OCI-LY7 (cell line): ENCODE measurements at regions of chr14 and their contacts with region 1.

Region 1: DNA sequence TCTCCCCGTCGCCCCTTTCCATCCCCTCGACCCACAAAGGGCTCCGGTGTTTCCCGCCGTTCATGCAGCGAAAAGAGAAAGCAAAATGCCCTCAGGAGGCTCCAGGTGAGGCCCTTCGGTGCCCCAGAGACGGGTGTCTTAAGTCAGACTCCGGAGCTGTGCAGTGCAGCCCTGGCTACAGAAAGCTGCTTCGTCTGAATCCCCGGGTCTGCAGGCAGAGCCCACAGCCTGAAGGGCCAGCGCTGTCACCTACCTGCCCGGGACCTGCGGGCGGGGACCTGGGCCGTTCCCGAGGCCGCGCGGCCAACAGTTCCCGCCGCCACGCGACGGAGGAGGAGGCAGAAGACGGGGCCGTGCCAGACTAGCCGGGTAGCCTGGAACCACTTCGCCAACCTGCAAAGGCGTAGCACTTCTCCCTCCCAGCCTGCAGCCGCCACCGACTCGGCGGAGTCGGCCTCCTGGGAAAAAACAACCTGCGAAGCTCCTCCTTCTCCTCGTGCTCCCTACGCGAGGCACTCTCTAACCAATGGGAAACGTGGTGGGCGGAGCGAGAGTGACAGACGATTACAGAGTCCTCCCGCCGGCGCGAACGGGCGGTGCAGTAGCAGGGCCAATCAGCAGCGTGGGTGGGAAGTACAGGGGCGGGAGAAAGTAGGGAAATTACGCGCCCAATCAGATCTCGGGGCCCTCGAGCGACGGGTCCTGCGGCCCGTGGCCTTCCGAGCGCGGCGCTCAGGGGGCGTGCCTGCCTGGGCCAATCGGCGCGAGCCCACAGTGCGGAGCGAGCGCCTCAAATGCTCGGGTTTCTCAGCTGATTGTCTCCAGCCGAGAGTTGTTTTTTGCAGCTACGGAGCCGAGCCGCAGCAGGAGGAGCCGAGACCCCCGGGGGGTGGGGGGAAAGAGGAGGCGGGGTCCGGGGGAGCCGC is at the starts of genes GPR137C and TXNDC16:
- DNase-seq: peak; percentile 100
- H3K4me3 ChIP-seq: peak within 1 kb of the TSS; percentile 99
- H3K27ac ChIP-seq: peak within 1 kb of the TSS; percentile 84
- H3K4me1 ChIP-seq: peaks cover 41% of the 10 kb centered on the region
- CTCF ChIP-seq: no peak
- total RNA-seq, gene GPR137C: 1.1 TPM in 2 replicates
- total RNA-seq, gene TXNDC16: 13.8 and 21.6 TPM in 2 replicates

Region 2: GRCh38 chr14:51651388-51652167 is 900.7 kb before region 1 on chr14 and contains the start of gene FRMD6:
- CTCF ChIA-PET with region 1: no interaction called
- POLR2A ChIA-PET with region 1: no interaction called
- intact Hi-C with region 1: loop called (anchors 5 kb)
- DNase-seq: peak; percentile 88
- H3K4me3 ChIP-seq: peak within 1 kb of the TSS; percentile 87
- H3K27ac ChIP-seq: peak within 1 kb of the TSS; percentile 78
- H3K4me1 ChIP-seq: peaks cover 31% of the 10 kb centered on the region
- CTCF ChIP-seq: peak; percentile 78
- total RNA-seq, gene FRMD6: 7.6 and 12.3 TPM in 2 replicates

Region 3: GRCh38 chr14:52695481-52696091 is 143.3 kb after region 1 on chr14 and contains the start of gene ERO1A:
- CTCF ChIA-PET with region 1: no interaction called
- POLR2A ChIA-PET with region 1: interaction called, 4 read pairs
- intact Hi-C with region 1: loop called (anchors 2 kb)
- DNase-seq: peak; percentile 76
- H3K4me3 ChIP-seq: peak within 1 kb of the TSS; percentile 93
- H3K27ac ChIP-seq: peak within 1 kb of the TSS; percentile 75
- H3K4me1 ChIP-seq: peaks cover 34% of the 10 kb centered on the region
- CTCF ChIP-seq: no peak
- total RNA-seq, gene ERO1A: 35.2 and 43.7 TPM in 2 replicates

Region 4: GRCh38 chr14:52729925-52730667 is 177.8 kb after region 1 on chr14 and contains the start of gene STYX:
- CTCF ChIA-PET with region 1: no interaction called
- POLR2A ChIA-PET with region 1: interaction called, 3 read pairs
- intact Hi-C with region 1: loop called (anchors 5 kb)
- DNase-seq: peak; percentile 98
- H3K4me3 ChIP-seq: peak within 1 kb of the TSS; percentile 90
- H3K27ac ChIP-seq: peak within 1 kb of the TSS; percentile 47
- H3K4me1 ChIP-seq: peaks cover 15% of the 10 kb centered on the region
- CTCF ChIP-seq: no peak
- total RNA-seq, gene STYX: 4.7 and 7.6 TPM in 2 replicates

Region 5: GRCh38 chr14:52748647-52749292 is 196.4 kb after region 1 on chr14:
- CTCF ChIA-PET with region 1: no interaction called
- POLR2A ChIA-PET with region 1: no interaction called
- intact Hi-C with region 1: no loop called
- DNase-seq: no peak
- H3K4me3 ChIP-seq: no peak overlapping the region
- H3K27ac ChIP-seq: no peak overlapping the region
- H3K4me1 ChIP-seq: no peaks in the 10 kb centered on the region
- CTCF ChIP-seq: no peak

Region 6: DNA sequence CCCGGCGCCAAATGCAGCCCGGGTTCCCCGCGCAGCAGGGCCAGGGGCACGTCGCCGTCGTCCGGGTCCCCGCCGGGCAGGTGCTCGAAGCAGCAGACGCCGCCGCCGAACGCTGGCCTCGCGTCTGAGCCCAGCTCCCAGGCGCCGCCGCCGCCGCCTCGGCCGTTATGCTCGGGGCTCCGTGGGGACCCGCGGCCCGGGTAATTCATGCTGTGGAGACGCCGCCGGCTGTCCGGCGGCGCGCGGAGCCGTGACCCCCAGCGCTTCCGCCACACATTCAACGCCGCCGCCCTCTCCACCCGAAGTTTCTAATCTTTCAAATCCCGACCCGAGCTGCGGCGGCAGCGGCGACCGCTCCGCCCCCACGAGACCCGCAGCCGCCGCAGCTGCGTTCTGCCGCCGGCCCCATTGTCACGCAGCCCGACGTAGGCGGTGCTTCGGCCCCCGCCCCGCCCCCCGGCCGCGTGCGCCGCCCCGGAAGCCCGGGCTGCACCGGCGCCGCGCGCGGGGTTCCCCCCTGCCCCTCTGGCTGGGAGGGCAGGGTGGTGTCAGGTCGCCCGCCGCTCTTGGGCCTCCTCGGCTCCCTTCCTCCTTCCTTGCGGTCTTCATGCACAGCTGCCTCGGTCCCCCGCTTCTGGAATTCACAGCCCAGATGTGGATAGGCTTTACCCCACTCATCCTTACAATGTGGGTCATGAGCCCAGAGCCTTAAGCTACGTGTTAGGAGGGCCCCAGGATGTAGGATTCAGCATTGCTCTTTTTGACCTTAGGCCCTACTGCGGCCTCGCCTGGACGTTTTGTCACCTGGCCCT is 600.8 kb after region 1 on chr14 and contains the start of gene DDHD1:
- CTCF ChIA-PET with region 1: no interaction called
- POLR2A ChIA-PET with region 1: no interaction called
- intact Hi-C with region 1: loop called (anchors 2 kb)
- DNase-seq: peak; percentile 89
- H3K4me3 ChIP-seq: peak within 1 kb of the TSS; percentile 85
- H3K27ac ChIP-seq: peak within 1 kb of the TSS; percentile 81
- H3K4me1 ChIP-seq: peaks cover 31% of the 10 kb centered on the region
- CTCF ChIP-seq: no peak
- total RNA-seq, gene DDHD1: 26.7 and 28.7 TPM in 2 replicates